ENCODE measurements at regions of chr3 and their contacts with region 1.

Region 1: GRCh38 chr3:188954590-188955208 is 217.1 kb upstream of the TPRG1 start:
- DNase-seq: peak; percentile 44 to 81 (median 68)
- ATAC-seq: peak; percentile 67 to 76
- H3K4me3 Mint-ChIP-seq: no peak overlapping the region
- H3K27ac Mint-ChIP-seq: no peak overlapping the region
- H3K4me1 Mint-ChIP-seq: peaks cover 0 to 12% (median 2%) of the 10 kb centered on the region in 4 donors
- H3K27me3 Mint-ChIP-seq: peaks cover 0 to 2% (median 0%) of the 10 kb centered on the region in 5 donors

Region 2: GRCh38 chr3:187739561-187740332 is 1215.0 kb before region 1 on chr3:
- POLR2A ChIA-PET with region 1: interaction called, 14 read pairs
- DNase-seq: peak; percentile 55 to 82 (median 77)
- ATAC-seq: peak; percentile 41 to 52
- H3K4me3 Mint-ChIP-seq: peak overlapping the region; percentile 94 to 100 (median 98)
- H3K27ac Mint-ChIP-seq: peak overlapping the region; percentile 83 to 100 (median 98)
- H3K4me1 Mint-ChIP-seq: peaks cover 34 to 70% (median 49%) of the 10 kb centered on the region in 4 donors
- H3K27me3 Mint-ChIP-seq: no peaks in the 10 kb centered on the region

Measured in naive thymus-derived CD8-positive, alpha-beta T cell (primary cell).